HEK293 (cell line): ENCODE measurements at regions of chr9 and their contacts with region 1.

Region 1: DNA sequence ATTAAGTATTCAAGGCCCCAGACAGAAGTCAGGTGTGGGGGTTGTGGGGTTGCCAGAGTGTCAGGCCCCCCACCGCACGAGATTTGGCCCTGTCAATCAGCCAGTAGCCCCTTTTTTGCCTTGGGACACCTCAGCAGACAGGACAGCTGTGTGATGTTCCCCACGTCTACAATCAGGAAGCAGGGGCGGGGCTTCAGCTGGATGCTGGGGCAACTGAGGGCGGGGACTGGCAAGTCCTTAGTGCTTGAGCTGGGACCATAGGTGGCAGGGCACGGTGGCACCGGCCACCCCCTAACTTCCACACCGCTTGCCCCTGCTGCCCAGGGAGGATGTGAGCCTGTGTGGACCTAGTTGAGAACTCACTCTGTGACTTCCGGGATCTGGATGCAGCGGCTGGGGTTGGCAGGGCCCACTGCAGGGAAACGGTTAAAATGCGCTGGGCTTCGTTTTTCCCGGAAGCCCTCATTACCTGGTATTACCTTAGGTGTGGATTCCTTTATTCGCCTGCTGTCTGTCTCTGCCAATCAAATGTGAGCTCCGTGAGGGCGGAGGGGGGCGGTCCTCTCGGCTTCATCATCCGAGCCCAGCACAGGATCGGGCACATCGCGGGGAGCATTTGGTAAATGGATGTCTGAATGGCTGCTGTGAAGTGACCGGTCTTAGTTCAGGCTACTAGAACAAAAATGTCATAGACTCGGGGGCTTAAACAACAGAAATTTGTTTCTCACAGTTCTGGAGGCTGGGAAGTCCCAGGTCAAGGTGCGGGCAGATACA is 7.5 kb upstream of the GTF3C5 start:
- H3K4me3 ChIP-seq: no peak overlapping the region
- H3K27ac ChIP-seq: no peak overlapping the region
- H3K4me1 ChIP-seq: no peaks in the 10 kb centered on the region
- CTCF ChIP-seq: no peak

Region 2: DNA sequence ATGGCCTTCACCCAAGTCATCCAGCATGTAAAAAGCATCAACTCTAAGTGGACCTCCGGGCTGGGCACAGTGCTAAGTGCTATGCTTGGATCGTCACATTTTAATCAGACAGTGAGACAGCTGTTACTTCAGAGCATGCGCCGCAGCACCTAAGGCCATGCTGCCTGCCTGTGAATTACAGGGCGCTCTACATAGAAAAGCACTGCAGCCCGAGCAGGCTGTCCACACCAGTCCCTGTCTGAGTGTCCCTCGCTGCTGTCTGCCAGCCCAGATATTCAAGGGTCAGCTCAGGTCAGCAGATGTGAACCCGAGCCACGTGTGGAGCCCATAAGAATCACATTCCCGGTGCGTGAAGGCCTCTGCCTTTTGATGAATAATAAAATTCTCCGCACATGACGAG is 182.3 kb before region 1 on chr9:
- CTCF ChIA-PET with region 1: no interaction called
- POLR2A ChIA-PET with region 1: no interaction called
- H3K4me3 ChIP-seq: no peak overlapping the region
- H3K27ac ChIP-seq: no peak overlapping the region
- H3K4me1 ChIP-seq: no peaks in the 10 kb centered on the region
- CTCF ChIP-seq: no peak

Region 3: DNA sequence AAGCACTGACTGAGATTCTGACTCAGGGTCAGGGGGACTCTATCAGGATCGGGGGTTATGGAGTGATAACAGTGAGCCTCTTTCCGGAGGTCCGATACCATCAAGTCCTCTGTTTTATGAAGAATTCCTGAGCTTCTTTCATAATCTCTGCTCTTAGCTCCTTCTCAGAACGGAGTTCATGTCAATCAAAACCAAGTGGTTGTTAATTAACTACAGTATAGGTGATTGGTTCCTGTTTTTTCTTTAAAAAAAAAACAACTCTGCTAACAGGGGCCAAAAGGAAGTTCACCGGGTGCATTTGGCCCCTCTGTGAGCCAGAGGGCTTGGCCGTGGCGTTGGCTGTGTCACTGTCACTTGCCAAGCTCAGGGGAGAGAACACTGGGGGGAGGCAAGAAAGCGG is 40.8 kb before region 1 on chr9:
- CTCF ChIA-PET with region 1: interaction called, 30 read pairs
- POLR2A ChIA-PET with region 1: no interaction called
- H3K4me3 ChIP-seq: no peak overlapping the region
- H3K27ac ChIP-seq: no peak overlapping the region
- H3K4me1 ChIP-seq: no peaks in the 10 kb centered on the region
- CTCF ChIP-seq: no peak

Region 4: GRCh38 chr9:133004091-133004998 is 19.0 kb before region 1 on chr9:
- CTCF ChIA-PET with region 1: interaction called, 56 read pairs
- POLR2A ChIA-PET with region 1: interaction called, 3 read pairs
- H3K4me3 ChIP-seq: no peak overlapping the region
- H3K27ac ChIP-seq: no peak overlapping the region
- H3K4me1 ChIP-seq: no peaks in the 10 kb centered on the region
- CTCF ChIP-seq: no peak

Region 5: GRCh38 chr9:133035669-133036068 is 12.4 kb after region 1 on chr9:
- CTCF ChIA-PET with region 1: interaction called, 78 read pairs
- POLR2A ChIA-PET with region 1: interaction called, 24 read pairs
- H3K4me3 ChIP-seq: no peak overlapping the region
- H3K27ac ChIP-seq: no peak overlapping the region
- H3K4me1 ChIP-seq: no peaks in the 10 kb centered on the region
- CTCF ChIP-seq: no peak

Region 6: GRCh38 chr9:133075925-133076630 is 52.8 kb after region 1 on chr9:
- CTCF ChIA-PET with region 1: interaction called, 13 read pairs
- POLR2A ChIA-PET with region 1: no interaction called
- H3K4me3 ChIP-seq: no peak overlapping the region
- H3K27ac ChIP-seq: no peak overlapping the region
- H3K4me1 ChIP-seq: no peaks in the 10 kb centered on the region
- CTCF ChIP-seq: no peak

Region 7: GRCh38 chr9:133149126-133150107 is 126.1 kb after region 1 on chr9:
- CTCF ChIA-PET with region 1: interaction called, 25 read pairs
- POLR2A ChIA-PET with region 1: interaction called, 3 read pairs
- H3K4me3 ChIP-seq: peak overlapping the region; percentile 64
- H3K27ac ChIP-seq: peak overlapping the region; percentile 89
- H3K4me1 ChIP-seq: 0 out of 2 replicates have a peak, but pooled peaks cover 3% of the 10 kb centered on the region
- CTCF ChIP-seq: peak; percentile 96

Region 8: GRCh38 chr9:133499132-133499891 is 476.0 kb after region 1 on chr9:
- CTCF ChIA-PET with region 1: interaction called, 11 read pairs
- POLR2A ChIA-PET with region 1: no interaction called
- H3K4me3 ChIP-seq: no peak overlapping the region
- H3K27ac ChIP-seq: no peak overlapping the region
- H3K4me1 ChIP-seq: no peaks in the 10 kb centered on the region
- CTCF ChIP-seq: no peak